Natural killer cell (primary cell): ENCODE measurements at regions of chr1 and their contacts with region 1.

Region 1: GRCh38 chr1:154669464-154670282 is 61.7 kb upstream of the ADAR start:
- DNase-seq: peak; percentile 26 to 87
- ATAC-seq: peak; percentile 76 to 85 (median 80)
- H3K4me3 ChIP-seq: no peak overlapping the region
- H3K4me3 Mint-ChIP-seq: no peak overlapping the region
- H3K27ac ChIP-seq: no peak overlapping the region
- H3K27ac Mint-ChIP-seq: no peak overlapping the region
- H3K4me1 ChIP-seq: no peaks in the 10 kb centered on the region
- H3K4me1 Mint-ChIP-seq: no peaks in the 10 kb centered on the region
- H3K27me3 ChIP-seq: no peaks in the 10 kb centered on the region
- H3K27me3 Mint-ChIP-seq: peaks cover 3 to 10% of the 10 kb centered on the region in 2 donors
- CTCF ChIP-seq: peak; percentile 23

Region 2: DNA sequence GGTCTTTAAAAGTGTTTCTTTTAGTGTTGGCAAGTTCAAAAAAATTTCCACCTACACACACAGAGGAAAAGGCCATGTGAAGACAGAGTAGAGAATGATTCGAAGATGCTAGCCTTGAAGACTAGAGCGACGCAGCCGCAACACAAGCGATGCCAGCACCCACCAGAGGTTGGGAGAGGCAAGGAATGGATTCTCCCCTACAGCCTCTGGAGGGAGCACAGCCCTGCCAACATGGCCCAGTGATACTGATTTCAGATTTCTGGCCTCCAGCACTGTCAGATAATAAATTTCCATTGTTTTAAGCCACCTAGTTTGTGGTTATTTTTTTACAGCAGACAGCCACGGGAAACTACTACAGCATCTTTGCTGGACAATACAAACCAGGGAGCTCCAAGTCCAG is 54.8 kb before region 1 on chr1:
- intact Hi-C with region 1: no loop called
- DNase-seq: no peak
- ATAC-seq: no peak
- H3K4me3 ChIP-seq: no peak overlapping the region
- H3K4me3 Mint-ChIP-seq: no peak overlapping the region
- H3K27ac ChIP-seq: no peak overlapping the region
- H3K27ac Mint-ChIP-seq: no peak overlapping the region
- H3K4me1 ChIP-seq: no peaks in the 10 kb centered on the region
- H3K4me1 Mint-ChIP-seq: peaks cover 6 to 12% of the 10 kb centered on the region in 2 donors
- H3K27me3 ChIP-seq: no peaks in the 10 kb centered on the region
- H3K27me3 Mint-ChIP-seq: no peaks in the 10 kb centered on the region
- CTCF ChIP-seq: no peak

Region 3: DNA sequence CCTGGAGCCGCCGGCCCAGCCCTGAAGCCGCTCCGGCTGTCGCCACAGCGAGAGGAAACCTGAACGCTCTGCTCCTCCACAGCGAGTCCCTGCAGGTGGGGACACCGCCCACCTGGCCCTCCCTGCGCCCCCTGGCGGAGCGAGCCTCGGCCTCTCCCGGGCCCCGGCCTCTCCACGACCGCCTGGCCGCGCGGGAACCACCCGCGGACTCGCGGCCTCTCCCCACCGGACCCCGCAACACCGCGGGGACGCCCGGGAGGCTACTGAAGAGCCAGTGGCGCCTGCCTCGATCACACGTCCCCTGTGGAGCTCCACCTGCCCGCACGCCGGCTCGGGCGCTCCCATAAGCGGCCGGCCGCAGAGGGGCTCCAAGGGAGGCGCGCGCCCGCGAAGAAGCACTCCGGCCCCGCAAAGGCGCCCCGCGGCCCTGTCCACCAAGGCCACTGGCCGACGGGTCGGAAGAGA is 90.8 kb after region 1 on chr1:
- intact Hi-C with region 1: loop called (anchors 2 kb)
- DNase-seq: peak; percentile 74 to 90
- ATAC-seq: peak; percentile 89 to 98 (median 94)
- H3K4me3 ChIP-seq: no peak overlapping the region
- H3K4me3 Mint-ChIP-seq: no peak overlapping the region
- H3K27ac ChIP-seq: no peak overlapping the region
- H3K27ac Mint-ChIP-seq: no peak overlapping the region
- H3K4me1 ChIP-seq: peaks cover 8% of the 10 kb centered on the region
- H3K4me1 Mint-ChIP-seq: peaks cover 0 to 5% of the 10 kb centered on the region in 2 donors
- H3K27me3 ChIP-seq: peaks cover 28% of the 10 kb centered on the region
- H3K27me3 Mint-ChIP-seq: peaks cover 38 to 60% of the 10 kb centered on the region in 2 donors
- CTCF ChIP-seq: peak; percentile 92